ENCODE measurements at regions of chr4 and their contacts with region 1.

Region 1: DNA sequence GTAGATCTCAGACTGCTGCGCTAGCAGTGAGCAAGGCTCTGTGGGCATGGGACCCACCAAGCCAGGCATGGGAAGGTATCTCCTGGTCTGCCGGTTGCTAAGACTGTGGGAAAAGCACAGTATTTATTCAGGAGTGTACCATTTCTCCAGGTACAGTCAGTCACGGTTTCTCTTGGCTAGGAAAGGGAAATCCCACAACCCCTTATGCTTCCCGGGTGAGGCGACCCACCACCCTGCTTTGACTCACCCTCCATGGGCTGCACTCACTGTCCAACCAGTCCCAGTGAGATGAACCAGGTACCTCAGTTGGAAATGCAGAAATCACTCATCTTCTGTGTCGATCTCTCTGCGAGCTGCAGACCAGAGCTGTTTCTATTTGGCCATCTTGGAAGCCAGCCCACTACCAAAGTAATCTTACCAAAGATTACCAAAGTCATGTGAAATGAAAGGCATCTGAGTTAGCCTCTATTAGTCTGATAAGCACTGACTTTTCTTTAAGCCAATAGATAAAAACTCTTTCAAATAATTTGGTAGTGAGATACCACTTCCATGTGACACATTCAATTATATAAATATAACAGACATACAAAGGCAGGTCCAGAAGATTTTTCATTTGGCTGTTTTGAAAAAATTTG is 8.5 kb upstream of the HTN1 start:
- DNase-seq: no peak
- ATAC-seq: no peak
- H3K4me3 ChIP-seq: no peak overlapping the region
- H3K27ac ChIP-seq: no peak overlapping the region
- H3K4me1 ChIP-seq: no peaks in the 10 kb centered on the region
- H3K27me3 ChIP-seq: no peaks in the 10 kb centered on the region
- CTCF ChIP-seq: no peak
- EP300 ChIP-seq: no peak
- POLR2A ChIP-seq: no peak
- RAD21 ChIP-seq: no peak

Region 2: DNA sequence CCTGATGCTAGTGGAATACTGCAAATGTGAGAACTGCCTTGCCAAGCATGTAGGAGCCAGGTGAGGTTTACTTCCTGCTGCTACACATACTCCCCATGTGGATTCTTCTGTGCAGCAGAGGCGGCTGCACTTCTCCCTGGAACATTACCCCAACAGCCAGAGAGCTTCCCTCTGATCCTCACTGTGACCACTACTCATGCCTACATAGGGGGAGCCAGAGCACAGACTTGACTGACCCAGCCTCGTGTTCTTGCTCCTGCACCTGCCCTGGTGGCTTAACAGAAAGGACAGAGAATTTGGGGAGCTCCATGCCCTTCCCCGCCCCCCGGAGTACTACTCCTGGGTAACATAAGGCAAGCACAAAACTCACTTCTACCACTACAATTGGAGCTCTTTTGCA is 440.7 kb before region 1 on chr4:
- CTCF ChIA-PET with region 1: no interaction called
- POLR2A ChIA-PET with region 1: no interaction called
- RAD21 ChIA-PET with region 1: no interaction called
- SMC1A ChIA-PET with region 1: no interaction called
- in situ Hi-C with region 1: no loop called
- intact Hi-C with region 1: no loop called
- DNase-seq: no peak
- ATAC-seq: no peak
- H3K4me3 ChIP-seq: no peak overlapping the region
- H3K27ac ChIP-seq: no peak overlapping the region
- H3K4me1 ChIP-seq: no peaks in the 10 kb centered on the region
- H3K27me3 ChIP-seq: no peaks in the 10 kb centered on the region
- CTCF ChIP-seq: no peak
- EP300 ChIP-seq: no peak
- POLR2A ChIP-seq: no peak
- RAD21 ChIP-seq: no peak

Region 3: GRCh38 chr4:70027017-70027416 is 14.8 kb before region 1 on chr4:
- CTCF ChIA-PET with region 1: no interaction called
- POLR2A ChIA-PET with region 1: no interaction called
- RAD21 ChIA-PET with region 1: no interaction called
- SMC1A ChIA-PET with region 1: interaction called, 10 read pairs
- in situ Hi-C with region 1: no loop called
- intact Hi-C with region 1: no loop called
- DNase-seq: no peak
- ATAC-seq: no peak
- H3K4me3 ChIP-seq: no peak overlapping the region
- H3K27ac ChIP-seq: no peak overlapping the region
- H3K4me1 ChIP-seq: no peaks in the 10 kb centered on the region
- H3K27me3 ChIP-seq: no peaks in the 10 kb centered on the region
- CTCF ChIP-seq: no peak
- EP300 ChIP-seq: no peak
- POLR2A ChIP-seq: no peak
- RAD21 ChIP-seq: no peak

Region 4: GRCh38 chr4:70062000-70062399 is 20.2 kb after region 1 on chr4:
- CTCF ChIA-PET with region 1: no interaction called
- POLR2A ChIA-PET with region 1: no interaction called
- RAD21 ChIA-PET with region 1: no interaction called
- SMC1A ChIA-PET with region 1: no interaction called
- in situ Hi-C with region 1: no loop called
- intact Hi-C with region 1: no loop called
- DNase-seq: peak; percentile 13
- ATAC-seq: peak; percentile 86
- H3K4me3 ChIP-seq: no peak overlapping the region
- H3K27ac ChIP-seq: no peak overlapping the region
- H3K4me1 ChIP-seq: no peaks in the 10 kb centered on the region
- H3K27me3 ChIP-seq: no peaks in the 10 kb centered on the region
- CTCF ChIP-seq: no peak
- EP300 ChIP-seq: no peak
- POLR2A ChIP-seq: no peak
- RAD21 ChIP-seq: no peak

Region 5: GRCh38 chr4:70120318-70120717 is 78.5 kb after region 1 on chr4:
- CTCF ChIA-PET with region 1: no interaction called
- POLR2A ChIA-PET with region 1: no interaction called
- RAD21 ChIA-PET with region 1: no interaction called
- SMC1A ChIA-PET with region 1: no interaction called
- in situ Hi-C with region 1: no loop called
- intact Hi-C with region 1: no loop called
- DNase-seq: no peak
- ATAC-seq: no peak
- H3K4me3 ChIP-seq: no peak overlapping the region
- H3K27ac ChIP-seq: no peak overlapping the region
- H3K4me1 ChIP-seq: no peaks in the 10 kb centered on the region
- H3K27me3 ChIP-seq: no peaks in the 10 kb centered on the region
- CTCF ChIP-seq: no peak
- EP300 ChIP-seq: no peak
- POLR2A ChIP-seq: no peak
- RAD21 ChIP-seq: no peak

Measured in GM12878 (cell line).